Activated CD4-positive, alpha-beta memory T cell treated with anti-CD3 and anti-CD28 coated beads for 36 hours (primary cell): ENCODE measurements at regions of chr1 and their contacts with region 1.

Region 1: GRCh38 chr1:97920832-97921571 is at the start of gene DPYD:
- DNase-seq: peak; percentile 88
- H3K4me3 Mint-ChIP-seq: peak within 1 kb of the TSS; percentile 82
- H3K27ac Mint-ChIP-seq: peak within 1 kb of the TSS; percentile 93
- H3K4me1 Mint-ChIP-seq: peaks cover 41% of the 10 kb centered on the region
- H3K27me3 Mint-ChIP-seq: no peaks in the 10 kb centered on the region
- total RNA-seq, gene DPYD: 11.8 to 12.2 TPM

Region 2: GRCh38 chr1:96721416-96722160 is 1199.4 kb before region 1 on chr1 and contains the start of gene PTBP2:
- CTCF ChIA-PET with region 1: no interaction called
- POLR2A ChIA-PET with region 1: no interaction called
- intact Hi-C with region 1: loop called (anchors 1 kb)
- DNase-seq: peak; percentile 88
- H3K4me3 Mint-ChIP-seq: peak within 1 kb of the TSS; percentile 89
- H3K27ac Mint-ChIP-seq: peak within 1 kb of the TSS; percentile 80
- H3K4me1 Mint-ChIP-seq: peaks cover 23% of the 10 kb centered on the region
- H3K27me3 Mint-ChIP-seq: no peaks in the 10 kb centered on the region
- total RNA-seq, gene PTBP2: 9.2 to 10.1 TPM

Region 3: GRCh38 chr1:97791251-97791650 is 129.8 kb before region 1 on chr1:
- CTCF ChIA-PET with region 1: interaction called, 3 read pairs
- POLR2A ChIA-PET with region 1: no interaction called
- intact Hi-C with region 1: loop called (anchors 2 kb)
- DNase-seq: no peak
- H3K4me3 Mint-ChIP-seq: no peak overlapping the region
- H3K27ac Mint-ChIP-seq: no peak overlapping the region
- H3K4me1 Mint-ChIP-seq: peaks cover 32% of the 10 kb centered on the region
- H3K27me3 Mint-ChIP-seq: no peaks in the 10 kb centered on the region

Region 4: GRCh38 chr1:97864615-97865014 is 56.4 kb before region 1 on chr1:
- CTCF ChIA-PET with region 1: no interaction called
- POLR2A ChIA-PET with region 1: no interaction called
- intact Hi-C with region 1: no loop called
- DNase-seq: no peak
- H3K4me3 Mint-ChIP-seq: no peak overlapping the region
- H3K27ac Mint-ChIP-seq: no peak overlapping the region
- H3K4me1 Mint-ChIP-seq: peaks cover 24% of the 10 kb centered on the region
- H3K27me3 Mint-ChIP-seq: no peaks in the 10 kb centered on the region

Region 5: GRCh38 chr1:97904528-97904927 is 16.5 kb before region 1 on chr1:
- CTCF ChIA-PET with region 1: interaction called, 4 read pairs
- POLR2A ChIA-PET with region 1: interaction called, 4 read pairs
- intact Hi-C with region 1: loop called (anchors 1 kb)
- DNase-seq: no peak
- H3K4me3 Mint-ChIP-seq: no peak overlapping the region
- H3K27ac Mint-ChIP-seq: peak overlapping the region; percentile 30
- H3K4me1 Mint-ChIP-seq: peaks cover 38% of the 10 kb centered on the region
- H3K27me3 Mint-ChIP-seq: no peaks in the 10 kb centered on the region

Region 6: DNA sequence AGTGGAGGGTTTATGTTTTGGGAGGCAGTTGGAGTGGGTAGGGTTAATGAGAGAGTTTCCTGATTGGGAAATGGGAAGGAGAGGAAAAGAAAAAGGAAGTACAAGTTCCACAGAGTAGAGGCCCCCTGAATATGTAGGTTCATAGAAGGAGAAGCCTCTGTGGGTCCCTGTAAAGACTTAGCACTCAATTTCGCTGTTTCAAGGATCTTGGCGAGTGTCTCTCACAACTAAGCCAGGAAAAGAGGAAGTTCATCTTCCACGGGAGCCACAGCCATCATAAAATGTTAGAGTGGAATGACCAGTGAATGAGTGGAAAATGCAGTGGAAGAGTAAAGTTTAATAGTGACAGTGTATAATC is 17.3 kb after region 1 on chr1:
- CTCF ChIA-PET with region 1: no interaction called
- POLR2A ChIA-PET with region 1: no interaction called
- intact Hi-C with region 1: loop called (anchors 2 kb)
- DNase-seq: no peak
- H3K4me3 Mint-ChIP-seq: no peak overlapping the region
- H3K27ac Mint-ChIP-seq: no peak overlapping the region
- H3K4me1 Mint-ChIP-seq: peaks cover 27% of the 10 kb centered on the region
- H3K27me3 Mint-ChIP-seq: no peaks in the 10 kb centered on the region

Region 7: GRCh38 chr1:98005326-98006010 is 84.5 kb after region 1 on chr1:
- CTCF ChIA-PET with region 1: no interaction called
- POLR2A ChIA-PET with region 1: no interaction called
- intact Hi-C with region 1: no loop called
- DNase-seq: no peak
- H3K4me3 Mint-ChIP-seq: no peak overlapping the region
- H3K27ac Mint-ChIP-seq: no peak overlapping the region
- H3K4me1 Mint-ChIP-seq: peaks cover 6% of the 10 kb centered on the region
- H3K27me3 Mint-ChIP-seq: no peaks in the 10 kb centered on the region

Region 8: GRCh38 chr1:98048244-98048643 is 127.2 kb after region 1 on chr1:
- CTCF ChIA-PET with region 1: interaction called, 5 read pairs
- POLR2A ChIA-PET with region 1: interaction called, 4 read pairs
- intact Hi-C with region 1: loop called (anchors 2 kb)
- DNase-seq: peak; percentile 85
- H3K4me3 Mint-ChIP-seq: no peak overlapping the region
- H3K27ac Mint-ChIP-seq: no peak overlapping the region
- H3K4me1 Mint-ChIP-seq: peaks cover 34% of the 10 kb centered on the region
- H3K27me3 Mint-ChIP-seq: peaks cover 65% of the 10 kb centered on the region